PC-3 (cell line): ENCODE measurements at regions of chr17 and their contacts with region 1.

Region 1: DNA sequence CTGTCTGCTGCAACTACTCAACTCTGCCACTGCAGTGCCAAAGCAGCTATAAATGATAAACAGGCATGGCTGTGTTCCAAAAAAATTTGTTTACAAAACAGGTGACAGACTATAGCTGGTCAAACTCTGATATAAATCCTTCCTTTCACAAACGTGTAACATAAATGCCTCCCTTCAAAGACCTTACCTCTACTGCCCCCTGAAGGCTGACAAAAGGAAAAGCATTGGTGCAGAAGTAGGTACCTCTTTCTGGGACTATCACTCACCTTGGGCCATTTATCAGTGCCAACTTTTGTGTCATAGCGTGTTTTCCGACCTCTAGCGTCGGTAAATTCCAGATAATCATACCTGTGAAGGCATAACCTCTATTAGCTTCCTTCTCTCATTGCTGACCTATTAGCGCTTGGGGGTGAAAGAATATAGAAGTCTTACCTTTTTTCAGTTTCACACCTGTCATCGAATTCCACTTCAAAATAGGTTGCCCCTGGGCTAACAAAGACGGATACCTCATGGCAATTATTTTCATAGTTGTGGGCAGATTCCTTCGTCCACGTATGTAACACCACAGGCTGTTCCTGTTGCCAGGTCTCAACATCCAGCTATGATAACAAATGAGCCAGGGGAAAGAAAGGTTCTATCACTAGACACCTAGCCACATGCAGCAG is 67.9 kb downstream of the ZZEF1 start:
- DNase-seq: peak; percentile 51
- ATAC-seq: no peak
- H3K4me3 ChIP-seq: no peak overlapping the region
- H3K27ac ChIP-seq: no peak overlapping the region
- H3K4me1 ChIP-seq: peaks cover 20% of the 10 kb centered on the region
- H3K27me3 ChIP-seq: no peaks in the 10 kb centered on the region
- CTCF ChIP-seq: peak; percentile 75

Region 2: GRCh38 chr17:3935140-3935542 is 139.8 kb before region 1 on chr17:
- CTCF ChIA-PET with region 1: no interaction called
- POLR2A ChIA-PET with region 1: no interaction called
- intact Hi-C with region 1: loop called (anchors 1 kb)
- DNase-seq: peak; percentile 77
- ATAC-seq: peak; percentile 99
- H3K4me3 ChIP-seq: no peak overlapping the region
- H3K27ac ChIP-seq: no peak overlapping the region
- H3K4me1 ChIP-seq: no peaks in the 10 kb centered on the region
- H3K27me3 ChIP-seq: no peaks in the 10 kb centered on the region
- CTCF ChIP-seq: peak; percentile 74

Region 3: DNA sequence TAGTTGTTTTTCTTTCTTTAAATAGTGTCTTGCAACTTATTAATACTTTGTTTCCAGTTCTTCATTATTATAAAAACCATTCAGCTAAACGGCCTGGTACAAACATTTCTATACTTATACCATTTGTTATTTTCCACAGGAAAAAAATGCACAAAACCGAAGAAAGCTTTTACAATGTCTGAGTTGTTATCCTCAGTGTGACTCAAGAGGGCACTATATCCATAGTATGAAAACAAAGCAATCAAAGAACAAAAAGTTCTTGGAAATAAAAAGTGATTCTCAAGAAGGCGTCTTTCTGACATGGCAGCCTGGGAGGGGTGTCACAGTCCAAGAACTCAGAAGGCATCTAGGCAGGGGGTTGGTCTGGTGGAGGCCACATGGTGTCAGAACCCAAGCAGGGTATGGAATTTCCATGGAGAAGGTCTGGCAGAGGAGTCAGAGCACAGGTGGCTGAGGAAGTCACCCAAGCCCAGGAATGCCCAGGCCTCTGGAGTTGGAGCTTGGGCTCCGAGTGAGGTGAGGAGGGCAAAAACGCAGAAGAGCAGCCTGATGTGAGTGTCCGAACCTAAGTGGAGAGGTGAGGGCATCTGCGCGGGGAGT is 39.8 kb before region 1 on chr17:
- CTCF ChIA-PET with region 1: no interaction called
- POLR2A ChIA-PET with region 1: no interaction called
- intact Hi-C with region 1: loop called (anchors 5 kb)
- DNase-seq: no peak
- ATAC-seq: no peak
- H3K4me3 ChIP-seq: no peak overlapping the region
- H3K27ac ChIP-seq: no peak overlapping the region
- H3K4me1 ChIP-seq: no peaks in the 10 kb centered on the region
- H3K27me3 ChIP-seq: no peaks in the 10 kb centered on the region
- CTCF ChIP-seq: peak; percentile 41

Region 4: DNA sequence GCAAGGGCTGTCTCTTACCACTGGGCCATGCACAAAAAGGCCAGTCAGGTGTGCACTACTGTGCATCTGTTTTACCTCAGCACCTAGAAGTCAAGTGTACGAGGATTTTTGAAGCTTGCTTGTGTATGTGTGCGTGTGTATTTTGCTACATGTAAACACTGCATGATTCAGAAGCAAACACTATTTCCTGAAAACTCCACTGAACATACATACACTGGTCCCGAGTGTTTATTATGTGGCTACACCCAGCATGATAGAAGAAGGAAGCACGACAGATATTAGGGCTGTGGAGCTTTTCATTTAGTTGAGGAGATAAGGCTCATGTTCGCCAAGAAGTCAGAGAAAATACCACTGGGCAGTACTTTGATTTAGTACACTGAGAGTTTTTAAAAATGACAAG is 21.4 kb before region 1 on chr17:
- CTCF ChIA-PET with region 1: no interaction called
- POLR2A ChIA-PET with region 1: no interaction called
- intact Hi-C with region 1: loop called (anchors 2 kb)
- DNase-seq: no peak
- ATAC-seq: no peak
- H3K4me3 ChIP-seq: no peak overlapping the region
- H3K27ac ChIP-seq: no peak overlapping the region
- H3K4me1 ChIP-seq: no peaks in the 10 kb centered on the region
- H3K27me3 ChIP-seq: no peaks in the 10 kb centered on the region
- CTCF ChIP-seq: no peak